ENCODE measurements at regions of chrX and their contacts with region 1.

Region 1: GRCh38 chrX:17242470-17242869 is 132.5 kb upstream of the NHS start:
- DNase-seq: peak; percentile 25 to 72 (median 37)
- H3K4me3 ChIP-seq: no peak overlapping the region
- H3K27ac ChIP-seq: no peak overlapping the region
- H3K4me1 ChIP-seq: no peaks in the 10 kb centered on the region
- H3K27me3 ChIP-seq: no peaks in the 10 kb centered on the region
- CTCF ChIP-seq: peak; percentile 69 to 86 (median 76)
- POLR2A ChIP-seq: no peak

Region 2: GRCh38 chrX:17174671-17175070 is 67.8 kb before region 1 on chrX:
- intact Hi-C with region 1: no loop called
- DNase-seq: peak in 5 of 7 donors; percentile 21 to 66 (median 38)
- H3K4me3 ChIP-seq: no peak overlapping the region
- H3K27ac ChIP-seq: no peak overlapping the region
- H3K4me1 ChIP-seq: no peaks in the 10 kb centered on the region
- H3K27me3 ChIP-seq: no peaks in the 10 kb centered on the region
- CTCF ChIP-seq: no peak
- POLR2A ChIP-seq: no peak

Region 3: DNA sequence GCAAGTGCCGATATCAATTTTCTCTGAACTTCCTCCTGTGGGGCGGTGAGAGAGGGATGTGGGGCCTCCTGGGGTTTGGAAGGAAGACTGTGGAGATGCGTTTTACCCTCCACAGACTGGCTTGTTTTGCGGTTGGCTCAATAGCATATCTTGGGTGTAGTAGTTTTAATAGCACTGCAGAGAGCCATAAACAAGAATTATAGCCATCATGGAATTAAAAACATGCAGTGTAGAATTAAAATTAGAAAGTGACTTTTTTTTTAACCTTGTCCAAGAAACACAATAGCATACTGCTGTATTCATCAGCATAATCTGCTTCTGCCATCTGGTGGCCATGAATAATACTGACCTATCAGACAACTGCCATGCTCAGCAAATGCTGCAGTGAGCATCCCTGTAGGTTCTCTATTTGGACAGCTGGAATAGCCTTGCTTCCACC is 447.5 kb after region 1 on chrX:
- intact Hi-C with region 1: loop called (anchors 10 kb)
- DNase-seq: peak; percentile 46 to 78 (median 70)
- H3K4me3 ChIP-seq: no peak overlapping the region
- H3K27ac ChIP-seq: no peak overlapping the region
- H3K4me1 ChIP-seq: no peaks in the 10 kb centered on the region
- H3K27me3 ChIP-seq: no peaks in the 10 kb centered on the region
- CTCF ChIP-seq: peak; percentile 47 to 76 (median 68)
- POLR2A ChIP-seq: no peak